ENCODE measurements at regions of chr6 and their contacts with region 1.

Region 1: GRCh38 chr6:106979427-106979884 is 4.9 kb upstream of the CD24 start:
- DNase-seq: peak; percentile 78 to 91 (median 91)
- ATAC-seq: peak; percentile 71 to 86
- H3K4me3 ChIP-seq: no peak overlapping the region
- H3K27ac ChIP-seq: no peak overlapping the region
- H3K4me1 ChIP-seq: no peaks in the 10 kb centered on the region
- H3K27me3 ChIP-seq: no peaks in the 10 kb centered on the region

Region 2: GRCh38 chr6:106339334-106340029 is 640.0 kb before region 1 on chr6:
- intact Hi-C with region 1: loop called in 2 of 4 experiments (anchors 5 to 10 kb)
- DNase-seq: peak in 1 of 3 donors; percentile 9
- ATAC-seq: peak; percentile 75 to 89
- H3K4me3 ChIP-seq: no peak overlapping the region
- H3K27ac ChIP-seq: no peak overlapping the region
- H3K4me1 ChIP-seq: no peaks in the 10 kb centered on the region
- H3K27me3 ChIP-seq: no peaks in the 10 kb centered on the region

Region 3: GRCh38 chr6:106444777-106445507 is 534.5 kb before region 1 on chr6:
- intact Hi-C with region 1: loop called in 2 of 4 experiments (anchors 10 kb)
- DNase-seq: no peak
- ATAC-seq: peak in 1 of 2 donors; percentile 73
- H3K4me3 ChIP-seq: no peak overlapping the region
- H3K27ac ChIP-seq: no peak overlapping the region
- H3K4me1 ChIP-seq: no peaks in the 10 kb centered on the region
- H3K27me3 ChIP-seq: no peaks in the 10 kb centered on the region

Region 4: DNA sequence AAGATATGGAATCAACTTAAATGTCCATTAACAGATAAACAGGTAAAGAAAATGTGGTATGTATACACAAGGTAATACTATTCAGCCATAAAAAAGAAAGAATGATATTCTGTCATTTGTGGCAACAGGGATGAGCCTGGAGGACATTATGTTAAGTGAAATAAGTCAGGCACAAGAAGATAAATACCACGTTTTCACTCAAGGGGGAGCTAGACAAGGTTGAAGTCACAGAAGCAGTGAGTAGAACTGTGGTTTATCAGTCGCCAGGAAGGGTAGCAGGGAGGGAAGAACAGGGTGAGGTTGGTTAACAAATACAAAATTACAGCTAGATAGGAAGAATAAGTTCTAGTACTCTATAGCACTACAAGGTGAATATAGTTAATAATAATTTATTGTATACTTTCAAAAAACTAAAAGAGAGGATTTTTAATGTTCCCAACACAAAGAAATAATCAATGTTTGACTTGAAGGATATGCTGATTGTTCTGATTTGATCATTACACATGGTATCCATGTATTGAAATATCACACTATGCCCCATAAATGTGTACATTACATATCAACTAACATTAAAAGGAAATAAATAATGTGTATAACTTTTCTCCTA is 371.3 kb before region 1 on chr6:
- intact Hi-C with region 1: loop called in 1 of 4 experiments (anchors 5 kb)
- DNase-seq: no peak
- ATAC-seq: no peak
- H3K4me3 ChIP-seq: no peak overlapping the region
- H3K27ac ChIP-seq: no peak overlapping the region
- H3K4me1 ChIP-seq: no peaks in the 10 kb centered on the region
- H3K27me3 ChIP-seq: no peaks in the 10 kb centered on the region

Region 5: DNA sequence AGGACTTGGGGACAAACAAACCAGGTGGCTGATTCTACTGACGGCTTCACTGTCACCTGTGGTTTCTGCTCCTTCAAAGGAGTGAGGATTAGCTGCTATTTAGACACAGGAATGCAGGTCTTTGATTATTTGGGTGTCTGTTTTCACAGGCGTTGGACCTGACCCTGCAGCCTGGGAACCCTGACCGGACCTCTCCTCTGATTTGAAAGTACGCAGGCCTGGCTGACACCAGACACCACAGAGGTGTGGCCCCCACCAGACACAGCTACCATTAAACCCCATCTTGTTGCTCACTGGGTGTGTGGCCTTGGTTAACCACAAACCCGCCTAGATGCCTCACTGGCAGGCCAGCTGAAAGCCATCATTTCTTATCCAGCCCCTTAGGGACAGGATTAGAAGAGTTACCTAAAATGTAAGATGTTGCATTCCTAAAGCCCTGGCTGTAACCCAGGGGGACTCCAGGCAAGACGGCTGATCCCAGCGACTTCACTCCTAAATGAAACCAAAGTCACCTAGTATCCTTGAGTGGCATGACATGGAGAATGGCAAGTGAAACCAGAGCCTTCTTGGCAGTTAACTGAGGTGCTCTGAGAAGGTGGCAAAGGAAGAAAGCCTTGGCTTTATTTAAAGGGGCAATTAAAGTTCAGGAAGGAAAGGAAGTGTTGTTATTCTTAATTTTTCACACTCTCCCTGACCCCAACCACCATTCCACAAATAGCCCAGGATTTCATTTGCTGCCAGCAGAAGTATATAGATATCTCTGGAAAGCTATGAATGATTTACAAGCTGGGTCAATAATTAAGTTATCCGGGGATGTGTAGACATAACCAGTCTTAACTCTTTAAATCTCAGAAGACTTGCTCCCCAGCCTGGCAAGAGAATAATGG is 180.2 kb before region 1 on chr6:
- intact Hi-C with region 1: no loop called
- DNase-seq: no peak
- ATAC-seq: no peak
- H3K4me3 ChIP-seq: no peak overlapping the region
- H3K27ac ChIP-seq: no peak overlapping the region
- H3K4me1 ChIP-seq: no peaks in the 10 kb centered on the region
- H3K27me3 ChIP-seq: no peaks in the 10 kb centered on the region